Activated CD4-positive, alpha-beta memory T cell treated with anti-CD3 and anti-CD28 coated beads, Interleukin-2, amount 10 ng/mL, durations not matched to agents 7 days and 5 days (primary cell): ENCODE measurements at regions of chr6 and their contacts with region 1.

Region 1: GRCh38 chr6:26234421-26235296 is 130.3 kb upstream of the BTN3A2 start:
- DNase-seq: peak; percentile 85
- H3K4me3 Mint-ChIP-seq: peak overlapping the region; percentile 76
- H3K27ac Mint-ChIP-seq: peak overlapping the region; percentile 95
- H3K4me1 Mint-ChIP-seq: peaks cover 41% of the 10 kb centered on the region
- H3K27me3 Mint-ChIP-seq: no peaks in the 10 kb centered on the region

Region 2: DNA sequence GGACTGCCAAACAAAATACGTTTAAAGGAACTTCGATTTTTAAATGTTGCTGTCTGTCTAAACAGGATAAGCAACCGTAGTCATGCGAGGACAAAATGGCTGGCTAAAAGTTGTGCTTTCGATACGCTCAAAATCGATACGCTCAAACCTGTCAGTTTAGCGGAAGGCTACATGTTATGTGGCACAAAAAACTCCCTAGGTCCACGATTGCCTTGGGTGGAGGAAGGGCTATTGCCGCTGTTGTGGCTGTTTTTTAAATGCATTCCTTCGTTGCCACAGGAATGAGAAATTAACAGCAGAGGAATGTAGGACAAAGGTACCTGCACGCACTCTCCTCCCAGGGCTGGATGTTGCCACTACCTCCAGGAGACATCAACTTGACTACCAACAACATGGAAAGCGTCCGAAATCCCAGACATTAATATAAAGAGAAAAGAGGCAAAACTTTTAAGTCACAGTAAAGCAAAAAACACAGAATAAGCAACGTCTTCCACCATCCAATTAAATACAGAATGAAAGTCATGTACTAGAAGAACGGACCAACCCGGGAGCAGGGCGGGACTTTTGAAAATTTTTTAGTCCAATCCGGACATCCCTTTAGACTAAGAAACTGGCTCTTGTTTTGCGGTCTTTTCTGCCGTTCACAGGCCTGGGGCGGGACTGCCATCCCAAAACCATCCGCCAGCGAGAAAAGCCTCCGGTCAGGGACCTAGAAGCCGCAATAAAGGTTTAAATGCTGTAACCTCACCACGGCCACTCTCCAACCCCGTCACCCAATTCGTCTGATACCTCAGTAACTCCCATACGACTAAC is 179.6 kb before region 1 on chr6:
- CTCF ChIA-PET with region 1: no interaction called
- POLR2A ChIA-PET with region 1: interaction called, 53 read pairs
- DNase-seq: peak; percentile 92
- H3K4me3 Mint-ChIP-seq: peak overlapping the region; percentile 83
- H3K27ac Mint-ChIP-seq: peak overlapping the region; percentile 99
- H3K4me1 Mint-ChIP-seq: peaks cover 37% of the 10 kb centered on the region
- H3K27me3 Mint-ChIP-seq: no peaks in the 10 kb centered on the region

Region 3: GRCh38 chr6:26196846-26197648 is 37.6 kb before region 1 on chr6:
- CTCF ChIA-PET with region 1: interaction called, 16 read pairs
- POLR2A ChIA-PET with region 1: interaction called, 600 read pairs
- DNase-seq: peak; percentile 85
- H3K4me3 Mint-ChIP-seq: peak overlapping the region; percentile 93
- H3K27ac Mint-ChIP-seq: peak overlapping the region; percentile 96
- H3K4me1 Mint-ChIP-seq: peaks cover 49% of the 10 kb centered on the region
- H3K27me3 Mint-ChIP-seq: no peaks in the 10 kb centered on the region

Region 4: GRCh38 chr6:26223650-26224546 is 10.8 kb before region 1 on chr6:
- CTCF ChIA-PET with region 1: interaction called, 11 read pairs
- POLR2A ChIA-PET with region 1: interaction called, 833 read pairs
- DNase-seq: peak; percentile 72
- H3K4me3 Mint-ChIP-seq: no peak overlapping the region
- H3K27ac Mint-ChIP-seq: no peak overlapping the region
- H3K4me1 Mint-ChIP-seq: peaks cover 31% of the 10 kb centered on the region
- H3K27me3 Mint-ChIP-seq: no peaks in the 10 kb centered on the region

Region 5: GRCh38 chr6:26264547-26264946 is 29.9 kb after region 1 on chr6:
- CTCF ChIA-PET with region 1: no interaction called
- POLR2A ChIA-PET with region 1: no interaction called
- DNase-seq: no peak
- H3K4me3 Mint-ChIP-seq: no peak overlapping the region
- H3K27ac Mint-ChIP-seq: no peak overlapping the region
- H3K4me1 Mint-ChIP-seq: peaks cover 16% of the 10 kb centered on the region
- H3K27me3 Mint-ChIP-seq: no peaks in the 10 kb centered on the region

Region 6: GRCh38 chr6:27132532-27133280 is 898.0 kb after region 1 on chr6:
- CTCF ChIA-PET with region 1: no interaction called
- POLR2A ChIA-PET with region 1: interaction called, 50 read pairs
- DNase-seq: peak; percentile 95
- H3K4me3 Mint-ChIP-seq: no peak overlapping the region
- H3K27ac Mint-ChIP-seq: no peak overlapping the region
- H3K4me1 Mint-ChIP-seq: peaks cover 60% of the 10 kb centered on the region
- H3K27me3 Mint-ChIP-seq: no peaks in the 10 kb centered on the region

Region 7: DNA sequence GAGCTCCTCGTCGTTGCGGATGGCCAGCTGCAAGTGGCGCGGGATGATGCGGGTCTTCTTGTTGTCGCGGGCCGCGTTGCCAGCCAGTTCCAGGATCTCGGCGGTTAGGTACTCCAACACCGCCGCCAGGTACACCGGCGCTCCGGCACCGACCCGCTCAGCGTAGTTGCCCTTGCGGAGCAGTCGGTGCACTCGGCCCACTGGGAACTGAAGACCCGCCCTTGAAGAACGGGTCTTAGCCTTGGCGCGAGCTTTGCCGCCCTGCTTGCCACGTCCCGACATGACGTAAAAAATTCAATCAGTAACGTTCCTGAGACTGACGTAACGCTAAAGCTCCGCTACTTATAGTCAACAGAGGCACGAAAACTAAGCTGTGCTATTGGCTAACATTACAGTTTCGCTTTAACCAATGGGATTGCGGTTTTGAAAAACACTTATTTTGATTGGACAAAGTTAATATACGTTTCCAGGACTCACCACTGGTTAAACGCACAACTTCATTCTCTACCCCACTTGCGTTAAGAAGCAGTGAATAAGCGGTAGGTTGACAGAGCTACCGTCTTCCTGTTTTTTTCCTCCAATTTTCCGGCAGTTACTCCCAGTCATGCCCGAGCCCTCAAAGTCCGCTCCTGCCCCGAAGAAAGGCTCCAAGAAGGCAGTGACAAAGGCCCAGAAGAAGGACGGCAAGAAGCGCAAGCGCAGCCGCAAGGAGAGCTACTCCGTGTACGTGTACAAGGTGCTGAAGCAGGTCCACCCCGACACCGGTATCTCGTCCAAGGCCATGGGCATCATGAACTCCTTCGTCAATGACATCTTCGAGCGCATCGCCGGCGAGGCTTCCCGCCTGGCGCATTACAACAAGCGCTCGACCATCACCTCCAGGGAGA is 1603.6 kb after region 1 on chr6:
- CTCF ChIA-PET with region 1: interaction called, 3 read pairs
- POLR2A ChIA-PET with region 1: interaction called, 23 read pairs
- DNase-seq: peak; percentile 90
- H3K4me3 Mint-ChIP-seq: no peak overlapping the region
- H3K27ac Mint-ChIP-seq: no peak overlapping the region
- H3K4me1 Mint-ChIP-seq: peaks cover 31% of the 10 kb centered on the region
- H3K27me3 Mint-ChIP-seq: no peaks in the 10 kb centered on the region